ENCODE measurements at regions of chr11 and their contacts with region 1.

Region 1: DNA sequence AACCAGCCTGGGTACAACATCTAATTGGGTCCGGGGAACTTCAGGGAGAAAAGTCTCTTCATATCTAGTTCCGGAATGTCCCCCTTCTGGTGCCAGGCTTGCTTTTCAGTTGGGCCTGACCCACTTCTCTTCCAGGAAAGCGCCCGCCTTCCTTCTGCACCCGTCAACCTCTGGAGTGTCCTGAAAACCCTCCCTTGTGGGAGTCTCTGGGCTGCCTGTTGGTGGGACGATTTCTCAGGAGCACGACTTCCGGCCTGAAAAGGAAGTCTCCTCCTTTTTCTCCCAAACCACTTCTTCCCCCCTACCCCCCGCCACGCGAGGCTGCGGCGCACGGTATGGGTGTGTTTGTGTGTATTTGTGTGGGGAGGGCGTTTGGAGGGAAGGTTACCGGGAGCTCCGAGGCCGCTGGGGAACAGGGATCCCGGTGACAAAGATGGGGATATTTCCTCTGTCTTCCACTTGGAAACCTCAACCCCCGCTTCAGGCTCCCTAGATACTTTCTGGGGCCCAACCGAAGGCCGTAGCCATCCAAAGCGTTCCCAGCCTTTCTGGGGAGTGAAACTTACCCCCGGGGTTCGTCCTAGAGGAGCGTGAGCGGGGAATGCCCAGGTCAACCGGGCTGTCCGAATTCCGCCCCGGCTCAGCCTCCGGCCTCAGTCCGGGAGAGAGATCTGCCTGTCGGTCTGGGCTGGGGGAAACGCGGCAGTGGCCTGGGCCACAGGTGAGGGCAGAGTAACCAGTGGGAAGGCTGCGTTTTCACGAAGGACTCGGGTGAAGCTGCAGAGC is at the start of gene NKAPD1:
- DNase-seq: peak; percentile 88
- ATAC-seq: peak; percentile 94
- H3K4me3 ChIP-seq: peak within 1 kb of the TSS; percentile 80
- H3K27ac ChIP-seq: peak within 1 kb of the TSS; percentile 85
- H3K4me1 ChIP-seq: no peaks in the 10 kb centered on the region
- H3K27me3 ChIP-seq: no peaks in the 10 kb centered on the region
- CTCF ChIP-seq: no peak
- POLR2A ChIP-seq: no peak
- RAD21 ChIP-seq: no peak
- total RNA-seq, gene NKAPD1: 17.2 and 24.4 TPM in 2 replicates

Region 2: GRCh38 chr11:111808063-111808588 is 266.1 kb before region 1 on chr11:
- CTCF ChIA-PET with region 1: no interaction called
- POLR2A ChIA-PET with region 1: no interaction called
- dilution Hi-C with region 1: no loop called
- in situ Hi-C with region 1: no loop called
- intact Hi-C with region 1: no loop called
- DNase-seq: no peak
- ATAC-seq: no peak
- H3K4me3 ChIP-seq: no peak overlapping the region
- H3K27ac ChIP-seq: no peak overlapping the region
- H3K4me1 ChIP-seq: no peaks in the 10 kb centered on the region
- H3K27me3 ChIP-seq: no peaks in the 10 kb centered on the region
- CTCF ChIP-seq: no peak
- POLR2A ChIP-seq: no peak
- RAD21 ChIP-seq: no peak

Region 3: GRCh38 chr11:112042161-112042960 is 31.9 kb before region 1 on chr11:
- CTCF ChIA-PET with region 1: no interaction called
- POLR2A ChIA-PET with region 1: no interaction called
- dilution Hi-C with region 1: no loop called
- in situ Hi-C with region 1: no loop called
- intact Hi-C with region 1: loop called (anchors 2 kb)
- DNase-seq: peak; percentile 26
- ATAC-seq: no peak
- H3K4me3 ChIP-seq: no peak overlapping the region
- H3K27ac ChIP-seq: no peak overlapping the region
- H3K4me1 ChIP-seq: no peaks in the 10 kb centered on the region
- H3K27me3 ChIP-seq: no peaks in the 10 kb centered on the region
- CTCF ChIP-seq: no peak
- POLR2A ChIP-seq: no peak
- RAD21 ChIP-seq: no peak

Measured in IMR-90 (cell line).